Dendritic cell treated with granulocyte-macrophage colony-stimulating factor and Interleukin-4, amounts not matched to agents 40 ng/mL and 50 ng/mL, for 4 days (primary cell): ENCODE measurements at regions of chr1 and their contacts with region 1.

Region 1: GRCh38 chr1:59013276-59013927 is 229.6 kb upstream of the JUN start:
- H3K4me3 Mint-ChIP-seq: no peak overlapping the region
- H3K27ac Mint-ChIP-seq: peak overlapping the region; percentile 31
- H3K4me1 Mint-ChIP-seq: peaks cover 57% of the 10 kb centered on the region
- H3K27me3 Mint-ChIP-seq: peaks cover 7% of the 10 kb centered on the region

Region 2: GRCh38 chr1:58979086-58979485 is 34.3 kb before region 1 on chr1:
- intact Hi-C with region 1: loop called (anchors 5 kb)
- H3K4me3 Mint-ChIP-seq: peak overlapping the region; percentile 71
- H3K27ac Mint-ChIP-seq: peak overlapping the region; percentile 92
- H3K4me1 Mint-ChIP-seq: peaks cover 88% of the 10 kb centered on the region
- H3K27me3 Mint-ChIP-seq: no peaks in the 10 kb centered on the region